ENCODE measurements at regions of chr16 and their contacts with region 1.

Region 1: DNA sequence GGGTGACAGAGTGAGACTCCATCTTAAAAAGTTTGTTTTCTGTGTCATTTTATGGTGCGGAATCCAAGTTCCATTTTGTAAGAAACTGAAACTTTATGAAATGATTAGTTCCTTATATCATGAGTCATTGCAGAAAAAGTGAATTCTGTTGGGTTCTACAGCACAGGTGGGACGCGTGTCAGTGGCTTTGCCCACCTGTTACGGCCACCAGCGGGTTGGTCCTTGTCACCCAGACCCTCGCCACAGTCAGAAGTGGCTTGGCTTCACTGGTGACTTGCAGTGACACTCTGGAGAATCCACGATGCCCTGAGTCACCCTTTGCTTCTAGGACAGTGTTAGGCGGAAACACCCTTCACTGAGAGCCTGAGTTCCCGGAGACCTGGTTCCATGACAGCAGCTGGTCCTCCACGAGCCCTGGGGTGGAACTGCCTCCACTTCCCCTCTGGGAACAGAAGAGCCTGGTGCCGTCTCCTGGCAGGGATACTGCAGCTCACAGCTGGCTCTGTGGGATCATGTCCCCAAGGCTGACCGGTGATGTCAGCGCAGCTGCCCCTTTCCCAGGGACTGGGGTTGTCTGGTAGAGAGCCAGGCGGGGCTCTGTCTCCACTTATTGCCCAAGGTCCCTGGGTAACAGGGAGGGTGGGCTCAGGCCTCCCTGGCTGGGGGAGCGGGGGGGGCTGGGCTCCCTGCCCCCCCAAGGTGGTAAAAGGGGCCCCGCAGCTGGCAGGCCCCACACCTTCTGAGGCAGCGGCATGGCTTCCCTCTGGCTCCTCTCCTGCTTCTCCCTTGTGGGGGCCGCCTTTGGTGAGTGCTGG is at the start of gene CTRB1:
- DNase-seq: no peak
- ATAC-seq: no peak
- H3K4me3 ChIP-seq: peak within 1 kb of the TSS; percentile 20 to 51
- H3K4me3 Mint-ChIP-seq: peak within 1 kb of the TSS; percentile 73 to 82 (median 76)
- H3K27ac ChIP-seq: peak within 1 kb of the TSS; percentile 47
- H3K27ac Mint-ChIP-seq: peak within 1 kb of the TSS; percentile 83 to 95
- H3K4me1 ChIP-seq: peaks cover 0 to 10% of the 10 kb centered on the region in 2 experiments
- H3K4me1 Mint-ChIP-seq: peaks cover 8 to 17% (median 12%) of the 10 kb centered on the region in 3 donors
- H3K27me3 ChIP-seq: no peaks in the 10 kb centered on the region
- H3K27me3 Mint-ChIP-seq: no peaks in the 10 kb centered on the region
- total RNA-seq, gene CTRB1: 6.1 to 8.3 (median 7.9) TPM in 3 of 5 donors, not detected in the others

Region 2: GRCh38 chr16:75239366-75240122 is 21.1 kb after region 1 on chr16:
- CTCF ChIA-PET with region 1: no interaction called
- POLR2A ChIA-PET with region 1: no interaction called
- DNase-seq: no peak
- ATAC-seq: no peak
- H3K4me3 ChIP-seq: no peak overlapping the region
- H3K4me3 Mint-ChIP-seq: no peak overlapping the region
- H3K27ac ChIP-seq: no peak overlapping the region
- H3K27ac Mint-ChIP-seq: no peak overlapping the region
- H3K4me1 ChIP-seq: peaks cover 0 to 3% of the 10 kb centered on the region in 2 experiments
- H3K4me1 Mint-ChIP-seq: peaks cover 0 to 5% (median 0%) of the 10 kb centered on the region in 3 donors
- H3K27me3 ChIP-seq: peaks cover 0 to 3% of the 10 kb centered on the region in 2 experiments
- H3K27me3 Mint-ChIP-seq: peaks cover 0 to 4% of the 10 kb centered on the region in 2 donors

Region 3: GRCh38 chr16:75420987-75421819 is 202.7 kb after region 1 on chr16:
- CTCF ChIA-PET with region 1: interaction called in 1 of 2 experiments, 11 read pairs
- POLR2A ChIA-PET with region 1: no interaction called
- DNase-seq: peak in 13 of 35 experiments; percentile 1 to 27 (median 21)
- ATAC-seq: peak; percentile 49 to 68 (median 56)
- H3K4me3 ChIP-seq: no peak overlapping the region
- H3K4me3 Mint-ChIP-seq: peak overlapping the region; percentile 21 to 50 (median 28)
- H3K27ac ChIP-seq: no peak overlapping the region
- H3K27ac Mint-ChIP-seq: peak overlapping the region; percentile 13 to 67
- H3K4me1 ChIP-seq: peaks cover 4% of the 10 kb centered on the region in 2 experiments
- H3K4me1 Mint-ChIP-seq: peaks cover 36 to 43% (median 43%) of the 10 kb centered on the region in 3 donors
- H3K27me3 ChIP-seq: no peaks in the 10 kb centered on the region
- H3K27me3 Mint-ChIP-seq: no peaks in the 10 kb centered on the region